Endothelial cell of umbilical vein (primary cell): ENCODE measurements at regions of chr10 and their contacts with region 1.

Region 1: GRCh38 chr10:29304264-29305030 is 15.6 kb downstream of the LYZL1 start:
- DNase-seq: peak; percentile 79
- H3K4me3 ChIP-seq: no peak overlapping the region
- H3K27ac ChIP-seq: no peak overlapping the region
- H3K4me1 ChIP-seq: no peaks in the 10 kb centered on the region
- H3K27me3 ChIP-seq: peaks cover 1 to 16% of the 10 kb centered on the region in 2 experiments
- CTCF ChIP-seq: peak; percentile 64 to 79
- POLR2A ChIP-seq: no peak

Region 2: DNA sequence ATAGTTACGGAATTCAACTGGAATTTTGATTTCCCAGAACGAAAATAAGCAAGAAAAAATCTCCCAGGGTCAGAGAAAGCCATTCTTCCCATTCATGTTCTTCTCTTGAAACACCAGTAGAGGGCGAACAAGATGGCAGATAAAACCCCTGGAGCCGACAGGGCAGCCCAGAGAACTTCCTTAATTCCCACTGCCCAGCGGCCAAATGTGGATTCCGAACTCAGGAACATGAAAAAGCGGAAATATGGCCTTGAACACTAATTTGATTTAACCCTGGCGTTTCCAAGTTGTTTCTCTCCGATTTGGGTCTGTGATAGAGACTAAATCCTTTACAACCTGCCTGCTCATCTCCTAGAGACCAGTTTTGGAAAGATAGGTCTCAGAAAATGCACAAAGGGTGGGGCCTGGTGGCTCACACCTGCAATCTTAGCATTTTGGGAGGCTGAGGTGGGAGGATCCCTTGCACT is 872.2 kb before region 1 on chr10:
- CTCF ChIA-PET with region 1: interaction called, 4 read pairs
- POLR2A ChIA-PET with region 1: no interaction called
- dilution Hi-C with region 1: no loop called
- intact Hi-C with region 1: loop called (anchors 1 kb)
- DNase-seq: peak; percentile 65
- H3K4me3 ChIP-seq: no peak overlapping the region
- H3K27ac ChIP-seq: no peak overlapping the region
- H3K4me1 ChIP-seq: no peaks in the 10 kb centered on the region
- H3K27me3 ChIP-seq: peaks cover 1% of the 10 kb centered on the region in 2 experiments
- CTCF ChIP-seq: peak; percentile 69 to 76
- POLR2A ChIP-seq: no peak

Region 3: GRCh38 chr10:28676968-28677887 is 627.2 kb before region 1 on chr10 and contains the start of gene BAMBI:
- CTCF ChIA-PET with region 1: interaction called, 9 read pairs
- POLR2A ChIA-PET with region 1: no interaction called
- dilution Hi-C with region 1: no loop called
- intact Hi-C with region 1: loop called (anchors 1 kb)
- DNase-seq: peak; percentile 92
- H3K4me3 ChIP-seq: peak within 1 kb of the TSS; percentile 30 to 78 (median 64)
- H3K27ac ChIP-seq: peak within 1 kb of the TSS; percentile 28
- H3K4me1 ChIP-seq: peaks cover 32% of the 10 kb centered on the region
- H3K27me3 ChIP-seq: peaks cover 18 to 36% of the 10 kb centered on the region in 2 experiments
- CTCF ChIP-seq: peak; percentile 62 to 69
- POLR2A ChIP-seq: peak; percentile 96
- total RNA-seq, gene BAMBI: 3.2 and 4.3 TPM in 2 replicates

Region 4: DNA sequence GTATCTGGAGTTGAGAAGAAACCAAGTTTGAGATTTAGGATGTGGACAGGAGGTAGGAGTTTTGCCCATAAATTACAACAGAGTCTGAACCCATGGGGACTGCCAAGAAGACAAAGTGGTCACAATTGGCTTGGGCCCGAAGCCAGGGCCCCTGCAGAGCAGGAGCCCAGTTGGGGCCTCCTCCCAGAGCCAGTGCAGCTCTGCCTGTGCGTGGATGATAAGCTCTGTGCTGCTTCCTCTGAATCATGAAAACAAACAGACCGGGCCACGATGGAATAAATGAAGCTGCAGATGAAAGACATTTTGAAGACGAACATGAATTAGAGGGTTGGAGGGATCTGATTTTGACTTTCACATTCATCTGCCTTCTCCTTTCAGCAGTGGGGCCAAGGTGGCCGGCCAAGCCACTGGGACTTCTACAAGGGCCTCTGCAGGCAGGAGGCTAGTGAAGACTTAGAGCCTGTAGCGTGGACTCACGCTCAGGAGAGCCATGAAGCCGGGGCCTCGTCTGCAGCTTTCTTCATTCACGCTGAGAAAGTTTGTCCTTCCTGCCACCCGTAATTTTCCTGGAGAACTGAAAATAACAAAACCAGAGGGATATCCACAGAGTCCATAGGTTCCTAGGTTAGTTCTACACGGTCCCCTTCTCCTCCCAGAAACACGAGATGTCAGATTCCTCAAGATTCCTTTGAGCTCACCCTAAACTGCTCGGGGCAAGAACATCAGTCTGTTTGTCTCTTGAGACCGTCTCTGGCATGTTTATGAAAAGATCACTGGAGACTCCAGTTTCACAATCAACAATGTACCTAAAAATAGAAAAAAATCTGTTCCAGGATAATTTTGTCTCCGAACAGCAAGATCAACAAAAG is 172.3 kb before region 1 on chr10:
- CTCF ChIA-PET with region 1: interaction called, 9 read pairs
- POLR2A ChIA-PET with region 1: no interaction called
- dilution Hi-C with region 1: no loop called
- intact Hi-C with region 1: loop called (anchors 10 kb)
- DNase-seq: peak; percentile 95
- H3K4me3 ChIP-seq: no peak overlapping the region
- H3K27ac ChIP-seq: peak overlapping the region; percentile 41
- H3K4me1 ChIP-seq: peaks cover 16% of the 10 kb centered on the region
- H3K27me3 ChIP-seq: peaks cover 6% of the 10 kb centered on the region in 2 experiments
- CTCF ChIP-seq: no peak
- POLR2A ChIP-seq: peak; percentile 54

Region 5: DNA sequence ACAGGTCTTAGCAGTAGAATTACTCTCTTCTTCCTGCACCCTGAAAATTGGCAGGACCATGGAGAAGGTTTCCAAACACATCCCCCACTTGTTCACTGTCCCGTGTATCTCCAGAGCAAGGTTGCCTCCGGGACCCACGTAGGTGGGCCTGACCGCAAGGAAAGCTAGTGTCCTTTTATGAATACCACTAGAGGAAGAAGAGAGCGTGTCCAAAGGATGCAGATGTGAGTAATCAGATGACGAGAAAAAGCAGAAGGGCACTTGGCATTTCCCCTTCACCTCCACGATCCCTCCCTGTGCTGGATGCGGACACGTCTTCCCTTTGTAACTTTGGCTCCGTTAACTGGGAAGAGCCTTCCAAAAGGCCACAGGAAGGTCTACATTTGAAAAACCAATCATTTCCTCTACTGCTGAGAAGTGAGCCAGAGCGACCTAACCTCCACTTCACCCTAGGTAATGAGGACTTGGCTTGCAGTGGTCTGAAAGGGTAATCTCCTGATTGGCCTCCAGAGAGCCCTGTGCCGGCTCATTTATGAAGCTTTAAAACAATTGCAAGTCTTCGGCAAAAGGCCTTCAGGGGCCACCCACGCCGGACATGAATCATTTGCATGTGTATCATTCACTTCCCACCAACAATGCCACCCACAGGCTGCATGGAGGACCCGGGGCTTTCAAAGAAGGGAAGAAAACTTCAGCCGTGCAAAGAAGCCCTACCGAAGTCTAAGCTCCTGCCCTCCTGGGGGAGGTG is 39.8 kb after region 1 on chr10:
- CTCF ChIA-PET with region 1: interaction called, 14 read pairs
- POLR2A ChIA-PET with region 1: no interaction called
- dilution Hi-C with region 1: no loop called
- intact Hi-C with region 1: no loop called
- DNase-seq: peak; percentile 68
- H3K4me3 ChIP-seq: no peak overlapping the region
- H3K27ac ChIP-seq: no peak overlapping the region
- H3K4me1 ChIP-seq: peaks cover 2% of the 10 kb centered on the region
- H3K27me3 ChIP-seq: peaks cover 11 to 15% of the 10 kb centered on the region in 2 experiments
- CTCF ChIP-seq: no peak
- POLR2A ChIP-seq: no peak

Region 6: GRCh38 chr10:29784175-29784773 is 479.8 kb after region 1 on chr10:
- CTCF ChIA-PET with region 1: no interaction called
- POLR2A ChIA-PET with region 1: no interaction called
- dilution Hi-C with region 1: no loop called
- intact Hi-C with region 1: no loop called
- DNase-seq: peak; percentile 99
- H3K4me3 ChIP-seq: no peak overlapping the region
- H3K27ac ChIP-seq: peak overlapping the region; percentile 82
- H3K4me1 ChIP-seq: peaks cover 27% of the 10 kb centered on the region
- H3K27me3 ChIP-seq: no peaks in the 10 kb centered on the region
- CTCF ChIP-seq: no peak
- POLR2A ChIP-seq: peak; percentile 63